BJ (cell line): ENCODE measurements at regions of chr11 and their contacts with region 1.

Region 1: GRCh38 chr11:65540297-65541092 is 15.6 kb downstream of the SCYL1 start:
- DNase-seq: peak; percentile 37
- H3K4me3 ChIP-seq: peak overlapping the region; percentile 18
- H3K27me3 ChIP-seq: no peaks in the 10 kb centered on the region
- CTCF ChIP-seq: peak; percentile 82

Region 2: GRCh38 chr11:65524741-65525545 is 15.6 kb before region 1 on chr11 and contains the start of gene SCYL1:
- CTCF ChIA-PET with region 1: interaction called, 27 read pairs
- POLR2A ChIA-PET with region 1: interaction called, 3 read pairs
- DNase-seq: no peak
- H3K4me3 ChIP-seq: peak within 1 kb of the TSS; percentile 96
- H3K27me3 ChIP-seq: no peaks in the 10 kb centered on the region
- CTCF ChIP-seq: no peak
- polyA plus RNA-seq, gene SCYL1: 81.7 and 134 TPM in 2 replicates

Region 3: GRCh38 chr11:65551572-65552398 is 11.3 kb after region 1 on chr11:
- CTCF ChIA-PET with region 1: interaction called, 26 read pairs
- POLR2A ChIA-PET with region 1: no interaction called
- DNase-seq: no peak
- H3K4me3 ChIP-seq: no peak overlapping the region
- H3K27me3 ChIP-seq: no peaks in the 10 kb centered on the region
- CTCF ChIP-seq: peak; percentile 53

Region 4: GRCh38 chr11:65569973-65570918 is 29.8 kb after region 1 on chr11 and contains the start of gene ZNRD2:
- CTCF ChIA-PET with region 1: interaction called, 74 read pairs
- POLR2A ChIA-PET with region 1: no interaction called
- DNase-seq: peak; percentile 89
- H3K4me3 ChIP-seq: peak within 1 kb of the TSS; percentile 93
- H3K27me3 ChIP-seq: no peaks in the 10 kb centered on the region
- CTCF ChIP-seq: peak; percentile 57
- polyA plus RNA-seq, gene ZNRD2: 48.7 and 73.3 TPM in 2 replicates

Region 5: GRCh38 chr11:65615229-65615941 is 74.9 kb after region 1 on chr11 and contains the start of gene PCNX3:
- CTCF ChIA-PET with region 1: interaction called, 14 read pairs
- POLR2A ChIA-PET with region 1: no interaction called
- DNase-seq: peak; percentile 100
- H3K4me3 ChIP-seq: peak within 1 kb of the TSS; percentile 76
- H3K27me3 ChIP-seq: no peaks in the 10 kb centered on the region
- CTCF ChIP-seq: no peak
- polyA plus RNA-seq, gene PCNX3: 9.8 and 19.7 TPM in 2 replicates